CD4-positive, alpha-beta memory T cell (primary cell): ENCODE measurements at regions of chr6 and their contacts with region 1.

Region 1: DNA sequence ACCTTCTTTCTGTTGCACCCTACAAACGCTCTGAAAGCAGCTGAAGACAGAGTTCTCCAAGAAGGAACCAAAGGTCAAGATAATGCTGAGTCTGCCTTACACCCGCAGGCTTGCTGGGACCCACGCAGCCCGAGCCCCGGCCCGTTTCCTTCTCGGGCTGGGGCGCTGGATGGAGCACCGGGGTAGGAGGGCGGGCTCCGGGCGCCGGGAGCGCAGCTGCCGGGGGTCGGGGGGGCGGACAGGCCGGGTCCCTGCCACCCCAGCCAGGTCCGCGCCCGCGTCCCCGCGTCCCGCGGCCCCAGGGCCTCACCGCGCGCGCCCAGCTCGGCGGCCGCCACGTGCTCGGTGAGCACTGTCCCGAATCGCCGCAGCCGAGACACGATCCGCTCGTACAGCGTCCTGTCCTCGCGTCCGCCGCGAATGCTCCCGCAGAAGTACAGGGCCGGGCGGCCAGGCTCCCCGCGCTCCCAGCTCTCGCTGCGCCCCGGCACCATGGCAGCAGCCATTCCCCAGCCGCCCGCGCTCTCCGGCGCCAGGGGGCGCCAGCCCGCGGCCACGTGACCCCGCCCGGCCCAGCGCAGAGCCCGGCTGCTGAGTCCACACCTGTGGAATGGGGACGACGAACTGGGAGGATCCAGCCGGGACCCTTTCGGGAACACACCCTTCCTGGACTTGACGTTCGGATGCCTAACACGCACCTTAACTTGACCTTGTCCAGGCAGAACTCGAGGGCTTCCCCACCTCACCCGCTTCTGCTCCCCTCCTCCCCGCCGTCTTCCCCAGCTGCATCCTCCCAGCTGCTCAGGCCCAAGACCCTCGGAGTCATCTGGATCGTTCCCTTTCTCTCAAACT is at the start of gene DNPH1:
- DNase-seq: peak; percentile 71 to 84 (median 79)
- H3K4me3 ChIP-seq: peak within 1 kb of the TSS; percentile 11 to 69
- H3K4me3 Mint-ChIP-seq: peak within 1 kb of the TSS; percentile 88 to 96 (median 92)
- H3K27ac ChIP-seq: peak within 1 kb of the TSS; percentile 63
- H3K27ac Mint-ChIP-seq: peak within 1 kb of the TSS; percentile 94 to 97 (median 95)
- H3K4me1 ChIP-seq: peaks cover 49% of the 10 kb centered on the region
- H3K4me1 Mint-ChIP-seq: peaks cover 26 to 48% (median 34%) of the 10 kb centered on the region in 4 donors
- H3K27me3 ChIP-seq: no peaks in the 10 kb centered on the region
- H3K27me3 Mint-ChIP-seq: peaks cover 3 to 4% of the 10 kb centered on the region in 2 donors
- total RNA-seq, gene DNPH1: 32.8 to 34.8 TPM

Region 2: GRCh38 chr6:43181942-43182860 is 47.0 kb before region 1 on chr6 and contains the start of gene CUL9:
- CTCF ChIA-PET with region 1: interaction called, 3 read pairs
- POLR2A ChIA-PET with region 1: interaction called, 10 read pairs
- intact Hi-C with region 1: no loop called
- DNase-seq: peak; percentile 78 to 81 (median 79)
- H3K4me3 ChIP-seq: peak within 1 kb of the TSS; percentile 55 to 78
- H3K4me3 Mint-ChIP-seq: peak within 1 kb of the TSS; percentile 83 to 96 (median 91)
- H3K27ac ChIP-seq: peak within 1 kb of the TSS; percentile 78
- H3K27ac Mint-ChIP-seq: peak within 1 kb of the TSS; percentile 81 to 98 (median 92)
- H3K4me1 ChIP-seq: peaks cover 57% of the 10 kb centered on the region
- H3K4me1 Mint-ChIP-seq: peaks cover 40 to 60% (median 49%) of the 10 kb centered on the region in 4 donors
- H3K27me3 ChIP-seq: no peaks in the 10 kb centered on the region
- H3K27me3 Mint-ChIP-seq: no peaks in the 10 kb centered on the region
- total RNA-seq, gene CUL9: 93.8 to 95.2 TPM